Activated CD8-positive, alpha-beta memory T cell treated with anti-CD3 and anti-CD28 coated beads, Interleukin-2, amount 10 ng/mL, durations not matched to agents 7 days and 5 days (primary cell): ENCODE measurements at regions of chr12 and their contacts with region 1.

Region 1: GRCh38 chr12:6851921-6852650 is at the start of gene USP5:
- DNase-seq: peak; percentile 100
- ATAC-seq: peak; percentile 82
- H3K4me3 Mint-ChIP-seq: peak within 1 kb of the TSS; percentile 85
- H3K27ac Mint-ChIP-seq: peak within 1 kb of the TSS; percentile 100
- H3K4me1 Mint-ChIP-seq: peaks cover 45% of the 10 kb centered on the region
- H3K27me3 Mint-ChIP-seq: no peaks in the 10 kb centered on the region
- total RNA-seq, gene USP5: 98.8 to 129 TPM

Region 2: GRCh38 chr12:6662906-6663742 is 189.0 kb before region 1 on chr12 and contains the start of gene ING4:
- CTCF ChIA-PET with region 1: no interaction called
- DNase-seq: peak; percentile 99
- ATAC-seq: peak; percentile 98
- H3K4me3 Mint-ChIP-seq: peak within 1 kb of the TSS; percentile 88
- H3K27ac Mint-ChIP-seq: peak within 1 kb of the TSS; percentile 92
- H3K4me1 Mint-ChIP-seq: peaks cover 24% of the 10 kb centered on the region
- H3K27me3 Mint-ChIP-seq: no peaks in the 10 kb centered on the region
- total RNA-seq, gene ING4: 26.0 to 26.3 TPM

Region 3: GRCh38 chr12:6764011-6764828 is 87.9 kb before region 1 on chr12:
- CTCF ChIA-PET with region 1: interaction called, 11 read pairs
- DNase-seq: peak; percentile 87
- ATAC-seq: peak; percentile 82
- H3K4me3 Mint-ChIP-seq: peak overlapping the region; percentile 62
- H3K27ac Mint-ChIP-seq: peak overlapping the region; percentile 39
- H3K4me1 Mint-ChIP-seq: peaks cover 40% of the 10 kb centered on the region
- H3K27me3 Mint-ChIP-seq: peaks cover 30% of the 10 kb centered on the region

Region 4: GRCh38 chr12:6788972-6789924 is 62.8 kb before region 1 on chr12 and contains the start of gene CD4:
- CTCF ChIA-PET with region 1: no interaction called
- DNase-seq: no peak
- ATAC-seq: peak; percentile 22
- H3K4me3 Mint-ChIP-seq: no peak within 1 kb of the TSS
- H3K27ac Mint-ChIP-seq: no peak within 1 kb of the TSS
- H3K4me1 Mint-ChIP-seq: peaks cover 27% of the 10 kb centered on the region
- H3K27me3 Mint-ChIP-seq: peaks cover 15% of the 10 kb centered on the region
- total RNA-seq, gene CD4: 0.82 to 1.8 TPM

Region 5: DNA sequence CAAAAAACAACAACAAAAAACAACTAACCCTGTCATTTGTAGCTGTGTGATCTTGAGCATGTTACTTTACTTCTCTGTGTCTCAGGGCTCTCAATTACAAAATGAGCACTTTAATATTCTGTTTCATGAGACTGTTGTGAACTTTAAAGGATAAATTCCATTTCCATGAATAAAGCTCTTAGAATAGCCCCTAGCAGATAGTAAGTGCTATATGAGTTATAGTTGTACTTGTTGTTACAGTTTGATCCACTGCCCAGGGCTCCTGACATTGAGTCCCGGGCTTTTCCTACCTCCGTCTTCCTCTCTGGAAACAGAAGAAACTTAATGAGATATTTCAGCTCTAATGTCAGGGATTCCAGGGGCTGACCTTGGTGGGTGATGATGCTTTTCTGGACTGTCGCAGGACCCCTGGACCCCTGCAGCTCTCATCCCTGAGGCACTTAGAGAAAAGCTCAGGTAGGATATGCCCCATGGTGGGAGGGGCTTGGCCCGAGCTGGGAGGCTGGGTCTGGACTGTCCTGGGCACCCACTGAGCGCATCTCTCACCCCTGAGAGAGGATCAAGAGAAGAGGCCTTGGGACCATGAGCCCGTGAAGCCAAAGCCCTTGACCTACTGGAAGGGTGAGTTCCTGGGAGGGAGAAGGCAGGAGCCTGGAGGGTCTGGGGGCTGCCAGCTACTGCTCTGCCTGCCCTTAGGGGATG is 18.7 kb before region 1 on chr12:
- CTCF ChIA-PET with region 1: interaction called, 59 read pairs
- DNase-seq: no peak
- ATAC-seq: no peak
- H3K4me3 Mint-ChIP-seq: no peak overlapping the region
- H3K27ac Mint-ChIP-seq: no peak overlapping the region
- H3K4me1 Mint-ChIP-seq: peaks cover 12% of the 10 kb centered on the region
- H3K27me3 Mint-ChIP-seq: peaks cover 34% of the 10 kb centered on the region

Region 6: GRCh38 chr12:6904280-6905278 is 52.5 kb after region 1 on chr12 and contains the start of gene LRRC23:
- CTCF ChIA-PET with region 1: no interaction called
- DNase-seq: peak; percentile 99
- ATAC-seq: peak; percentile 98
- H3K4me3 Mint-ChIP-seq: no peak within 1 kb of the TSS
- H3K27ac Mint-ChIP-seq: no peak within 1 kb of the TSS
- H3K4me1 Mint-ChIP-seq: peaks cover 3% of the 10 kb centered on the region
- H3K27me3 Mint-ChIP-seq: no peaks in the 10 kb centered on the region
- total RNA-seq, gene LRRC23: 4.9 to 8.7 TPM